ENCODE measurements at regions of chr5 and their contacts with region 1.

Region 1: DNA sequence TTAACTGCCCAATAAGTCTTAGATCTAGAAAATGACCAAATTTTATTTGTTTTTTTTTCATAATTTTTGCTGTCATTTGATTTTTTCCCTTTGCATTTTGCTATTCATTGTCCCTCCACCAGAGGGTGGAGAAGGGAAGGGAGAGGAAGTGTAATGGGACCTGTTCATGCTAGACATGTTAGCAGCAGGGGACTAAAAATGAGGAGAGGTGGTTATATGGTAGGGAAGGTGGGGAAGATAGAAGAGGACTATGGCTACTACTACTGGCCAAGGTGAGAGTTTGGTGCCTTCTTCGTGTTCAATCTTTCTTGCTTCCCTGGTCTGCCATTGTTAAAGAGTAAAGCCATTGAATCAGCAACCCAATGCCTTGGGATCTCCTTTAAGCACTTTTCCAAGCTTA is 6.4 kb downstream of the GRIA1 start:
- DNase-seq: peak in 1 of 2 experiments; percentile 36
- H3K4me3 ChIP-seq: no peak overlapping the region
- H3K4me3 Mint-ChIP-seq: no peak overlapping the region
- H3K27ac Mint-ChIP-seq: no peak overlapping the region
- H3K4me1 ChIP-seq: no peaks in the 10 kb centered on the region
- H3K4me1 Mint-ChIP-seq: peaks cover 2% of the 10 kb centered on the region
- H3K27me3 ChIP-seq: peaks cover 1% of the 10 kb centered on the region; the same call in 1 of the 2 replicates
- H3K27me3 Mint-ChIP-seq: peaks cover 8% of the 10 kb centered on the region
- CTCF ChIP-seq: peak; percentile 54 to 83

Region 2: GRCh38 chr5:153629027-153629895 is 132.4 kb after region 1 on chr5:
- CTCF ChIA-PET with region 1: no interaction called
- POLR2A ChIA-PET with region 1: no interaction called
- intact Hi-C with region 1: loop called (anchors 2 kb)
- DNase-seq: peak in 1 of 2 experiments; percentile 31
- H3K4me3 ChIP-seq: no peak overlapping the region
- H3K4me3 Mint-ChIP-seq: no peak overlapping the region
- H3K27ac Mint-ChIP-seq: no peak overlapping the region
- H3K4me1 ChIP-seq: no peaks in the 10 kb centered on the region
- H3K4me1 Mint-ChIP-seq: no peaks in the 10 kb centered on the region
- H3K27me3 ChIP-seq: no peaks in the 10 kb centered on the region
- H3K27me3 Mint-ChIP-seq: peaks cover 13% of the 10 kb centered on the region
- CTCF ChIP-seq: no peak

Region 3: DNA sequence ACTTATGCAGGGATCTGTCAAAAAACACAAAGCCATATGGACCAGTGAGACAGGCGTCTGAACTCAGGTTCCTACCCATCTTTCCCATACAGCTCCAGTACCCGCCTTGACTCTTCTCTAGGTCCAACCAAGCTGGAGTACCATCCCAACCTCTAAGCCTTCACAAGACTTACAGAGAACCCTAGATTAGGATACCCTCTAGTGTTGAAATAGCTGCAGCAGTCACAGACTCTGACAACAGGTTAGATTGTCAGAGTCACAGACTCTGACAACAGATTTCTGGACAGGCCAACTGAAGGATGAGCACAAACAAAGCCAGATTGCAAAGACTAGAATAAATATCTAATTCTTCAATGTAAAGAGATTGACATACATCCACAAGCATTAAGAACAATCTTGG is 259.7 kb after region 1 on chr5:
- CTCF ChIA-PET with region 1: no interaction called
- POLR2A ChIA-PET with region 1: no interaction called
- intact Hi-C with region 1: loop called (anchors 2 kb)
- DNase-seq: no peak
- H3K4me3 ChIP-seq: no peak overlapping the region
- H3K4me3 Mint-ChIP-seq: no peak overlapping the region
- H3K27ac Mint-ChIP-seq: no peak overlapping the region
- H3K4me1 ChIP-seq: 0 out of 2 replicates have a peak, but pooled peaks cover 8% of the 10 kb centered on the region
- H3K4me1 Mint-ChIP-seq: no peaks in the 10 kb centered on the region
- H3K27me3 ChIP-seq: no peaks in the 10 kb centered on the region; the same call in 1 of the 2 replicates
- H3K27me3 Mint-ChIP-seq: peaks cover 3% of the 10 kb centered on the region
- CTCF ChIP-seq: peak in 1 of 2 experiments; percentile 22

Measured in Caco-2 (cell line).